CD8-positive, alpha-beta T cell (primary cell): ENCODE measurements at regions of chr19 and their contacts with region 1.

Region 1: GRCh38 chr19:8580710-8581281 is 3.6 kb upstream of the MYO1F start:
- DNase-seq: peak; percentile 78 to 96 (median 88)
- ATAC-seq: peak; percentile 71
- H3K4me3 ChIP-seq: no peak overlapping the region
- H3K4me3 Mint-ChIP-seq: no peak overlapping the region
- H3K27ac ChIP-seq: no peak overlapping the region
- H3K27ac Mint-ChIP-seq: no peak overlapping the region
- H3K4me1 ChIP-seq: peaks cover 51% of the 10 kb centered on the region
- H3K4me1 Mint-ChIP-seq: peaks cover 33% of the 10 kb centered on the region
- H3K27me3 ChIP-seq: no peaks in the 10 kb centered on the region
- H3K27me3 Mint-ChIP-seq: no peaks in the 10 kb centered on the region
- CTCF ChIP-seq: peak; percentile 99

Region 2: GRCh38 chr19:7394731-7395359 is 1186.0 kb before region 1 on chr19:
- CTCF ChIA-PET with region 1: no interaction called
- POLR2A ChIA-PET with region 1: no interaction called
- intact Hi-C with region 1: loop called in 1 of 2 experiments (anchors 5 kb)
- DNase-seq: peak; percentile 79 to 97 (median 89)
- ATAC-seq: peak; percentile 90
- H3K4me3 ChIP-seq: peak overlapping the region; percentile 39 to 65
- H3K4me3 Mint-ChIP-seq: peak overlapping the region; percentile 86
- H3K27ac ChIP-seq: peak overlapping the region; percentile 12 to 72
- H3K27ac Mint-ChIP-seq: peak overlapping the region; percentile 87
- H3K4me1 ChIP-seq: peaks cover 26% of the 10 kb centered on the region
- H3K4me1 Mint-ChIP-seq: peaks cover 41% of the 10 kb centered on the region
- H3K27me3 ChIP-seq: no peaks in the 10 kb centered on the region
- H3K27me3 Mint-ChIP-seq: no peaks in the 10 kb centered on the region
- CTCF ChIP-seq: no peak

Region 3: DNA sequence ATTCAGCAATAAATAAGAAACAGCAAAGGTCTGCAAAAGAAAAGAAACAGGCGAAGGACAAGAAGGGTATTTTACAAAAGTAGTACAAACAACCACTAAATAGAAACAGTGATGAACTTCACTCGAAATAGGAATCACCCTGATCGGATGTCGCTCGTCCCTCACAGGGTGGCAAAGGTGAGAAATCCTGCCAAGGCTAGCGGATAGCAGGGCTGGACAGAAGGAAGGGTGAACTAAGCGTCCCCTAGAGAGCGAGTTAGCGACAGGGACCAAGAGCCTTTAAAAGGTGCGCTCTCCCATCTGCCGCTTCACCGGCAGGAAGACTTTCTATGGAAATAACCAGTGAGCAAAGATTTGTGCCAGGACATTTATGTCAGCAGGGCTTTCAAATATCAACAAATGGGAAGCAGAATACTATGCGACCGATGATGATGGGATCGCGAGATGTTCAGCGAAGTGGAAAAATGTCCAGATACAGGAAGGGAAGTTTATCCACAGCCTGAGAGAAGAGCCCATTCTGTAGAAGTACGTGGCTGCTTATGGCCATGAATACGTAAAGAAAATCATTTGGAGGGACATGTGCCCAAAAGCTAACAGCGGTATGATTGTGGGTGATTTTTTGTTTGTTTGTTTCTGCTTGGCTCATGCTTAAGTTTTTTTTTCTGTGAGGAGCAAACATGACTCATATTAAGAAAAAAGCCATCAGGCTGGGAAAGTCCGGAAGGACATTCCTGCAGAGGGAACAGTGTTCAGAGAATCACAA is 594.3 kb before region 1 on chr19:
- CTCF ChIA-PET with region 1: no interaction called
- POLR2A ChIA-PET with region 1: no interaction called
- intact Hi-C with region 1: no loop called
- DNase-seq: no peak
- ATAC-seq: no peak
- H3K4me3 ChIP-seq: no peak overlapping the region
- H3K4me3 Mint-ChIP-seq: no peak overlapping the region
- H3K27ac ChIP-seq: no peak overlapping the region
- H3K27ac Mint-ChIP-seq: no peak overlapping the region
- H3K4me1 ChIP-seq: no peaks in the 10 kb centered on the region
- H3K4me1 Mint-ChIP-seq: peaks cover 6% of the 10 kb centered on the region
- H3K27me3 ChIP-seq: no peaks in the 10 kb centered on the region
- H3K27me3 Mint-ChIP-seq: no peaks in the 10 kb centered on the region
- CTCF ChIP-seq: no peak

Region 4: DNA sequence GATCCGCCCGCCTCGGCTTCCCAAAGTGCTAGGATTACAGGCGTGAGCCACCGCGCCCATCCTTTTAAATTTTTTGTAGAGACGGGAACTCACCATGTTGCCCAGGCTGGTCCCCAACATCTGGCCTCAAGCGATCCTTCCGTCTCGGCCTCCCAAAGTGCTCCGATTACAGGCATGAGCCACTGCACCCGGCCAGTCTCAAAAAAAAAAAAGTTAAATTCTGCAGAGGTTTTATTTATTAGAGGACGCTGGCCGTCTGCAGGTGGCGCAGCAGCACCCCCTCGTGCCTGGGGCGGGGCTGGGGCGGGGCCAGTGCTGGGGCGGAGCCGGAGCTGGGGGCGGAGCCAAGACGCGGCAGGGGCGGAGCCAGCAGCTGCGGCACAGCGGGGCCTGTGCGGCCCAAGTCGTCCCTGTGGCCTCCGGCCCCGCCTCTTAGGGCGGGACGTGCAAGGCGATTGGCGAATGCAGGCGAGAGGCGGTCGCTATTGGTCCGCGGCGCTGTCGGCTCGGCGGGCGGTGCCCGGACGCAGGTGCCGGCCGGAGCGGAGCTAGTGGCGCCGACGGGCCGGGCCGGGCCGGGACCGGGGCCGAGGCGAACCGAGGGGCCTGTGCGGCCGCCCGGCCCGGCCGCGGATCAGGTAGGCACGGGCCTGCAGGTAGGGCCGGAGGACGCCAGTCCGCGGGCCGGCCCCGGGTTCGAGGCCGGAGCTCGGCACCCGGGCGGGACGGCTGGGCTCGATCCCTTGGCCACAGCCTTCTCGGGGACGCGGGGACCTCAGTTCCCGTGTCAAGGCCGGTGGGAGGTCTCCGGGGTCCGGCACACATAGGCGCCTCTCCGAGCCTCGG is 167.8 kb before region 1 on chr19 and contains the start of gene MARCHF2:
- CTCF ChIA-PET with region 1: interaction called, 40 read pairs
- POLR2A ChIA-PET with region 1: interaction called, 6 read pairs
- intact Hi-C with region 1: loop called (anchors 2 kb)
- DNase-seq: peak; percentile 92 to 99 (median 96)
- ATAC-seq: peak; percentile 100
- H3K4me3 ChIP-seq: peak within 1 kb of the TSS; percentile 66 to 82
- H3K4me3 Mint-ChIP-seq: peak within 1 kb of the TSS; percentile 72
- H3K27ac ChIP-seq: no peak within 1 kb of the TSS
- H3K27ac Mint-ChIP-seq: no peak within 1 kb of the TSS
- H3K4me1 ChIP-seq: peaks cover 7% of the 10 kb centered on the region
- H3K4me1 Mint-ChIP-seq: peaks cover 8% of the 10 kb centered on the region
- H3K27me3 ChIP-seq: no peaks in the 10 kb centered on the region
- H3K27me3 Mint-ChIP-seq: no peaks in the 10 kb centered on the region
- CTCF ChIP-seq: peak; percentile 65
- total RNA-seq, gene MARCHF2: 14.5 to 17.5 TPM

Region 5: GRCh38 chr19:8513687-8514504 is 66.9 kb before region 1 on chr19 and contains the start of gene ZNF414:
- CTCF ChIA-PET with region 1: interaction called, 202 read pairs
- POLR2A ChIA-PET with region 1: interaction called, 81 read pairs
- intact Hi-C with region 1: loop called (anchors 2 kb)
- DNase-seq: peak; percentile 96 to 99 (median 97)
- ATAC-seq: peak; percentile 76
- H3K4me3 ChIP-seq: peak within 1 kb of the TSS; percentile 59 to 98
- H3K4me3 Mint-ChIP-seq: peak within 1 kb of the TSS; percentile 95
- H3K27ac ChIP-seq: peak within 1 kb of the TSS; percentile 90 to 96
- H3K27ac Mint-ChIP-seq: peak within 1 kb of the TSS; percentile 99
- H3K4me1 ChIP-seq: peaks cover 65% of the 10 kb centered on the region
- H3K4me1 Mint-ChIP-seq: peaks cover 51% of the 10 kb centered on the region
- H3K27me3 ChIP-seq: no peaks in the 10 kb centered on the region
- H3K27me3 Mint-ChIP-seq: no peaks in the 10 kb centered on the region
- CTCF ChIP-seq: no peak
- total RNA-seq, gene ZNF414: 26.3 to 33.1 TPM

Region 6: GRCh38 chr19:8557642-8558238 is 23.1 kb before region 1 on chr19:
- CTCF ChIA-PET with region 1: interaction called, 42 read pairs
- POLR2A ChIA-PET with region 1: interaction called, 6 read pairs
- intact Hi-C with region 1: no loop called
- DNase-seq: no peak
- ATAC-seq: no peak
- H3K4me3 ChIP-seq: no peak overlapping the region
- H3K4me3 Mint-ChIP-seq: no peak overlapping the region
- H3K27ac ChIP-seq: peak overlapping the region in 1 of 2 experiments; percentile 27
- H3K27ac Mint-ChIP-seq: peak overlapping the region; percentile 82
- H3K4me1 ChIP-seq: peaks cover 14% of the 10 kb centered on the region
- H3K4me1 Mint-ChIP-seq: peaks cover 32% of the 10 kb centered on the region
- H3K27me3 ChIP-seq: no peaks in the 10 kb centered on the region
- H3K27me3 Mint-ChIP-seq: no peaks in the 10 kb centered on the region
- CTCF ChIP-seq: no peak

Region 7: DNA sequence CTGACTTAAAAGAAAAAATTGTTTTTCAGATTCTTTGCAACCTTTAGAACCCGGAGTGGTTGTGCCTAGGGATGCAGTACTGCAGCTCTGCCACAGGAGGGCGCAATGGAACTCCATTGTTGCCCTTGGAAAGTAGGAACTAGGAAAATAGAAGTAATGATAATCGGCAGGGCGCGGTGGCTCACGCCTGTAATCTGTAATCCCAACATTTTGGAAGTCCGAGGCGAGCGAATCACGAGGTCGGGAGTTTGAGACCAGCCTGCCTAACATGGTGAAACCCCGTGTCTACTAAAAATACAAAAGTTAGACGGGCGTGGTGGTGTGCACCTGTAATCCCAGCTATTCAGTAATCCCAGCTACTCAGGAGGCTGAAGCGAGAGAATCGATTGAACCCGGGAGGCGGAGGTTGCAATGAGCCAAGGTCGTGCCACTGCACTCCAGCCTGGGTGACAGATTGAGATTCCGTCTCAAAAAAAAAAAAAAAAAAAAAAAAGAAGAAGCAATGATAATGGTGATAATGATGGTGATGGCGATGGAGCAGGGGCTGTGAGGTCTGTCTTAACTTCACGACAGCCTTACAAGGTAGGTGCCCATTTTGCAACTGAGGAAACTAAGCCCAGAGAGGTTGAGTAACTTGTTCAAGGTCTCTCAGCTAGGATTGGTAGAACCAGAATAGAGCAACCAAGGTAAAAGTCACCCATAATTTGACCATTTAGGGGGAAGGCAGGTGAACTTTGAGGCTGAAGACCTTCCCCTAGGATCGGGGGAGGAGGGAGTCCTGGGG is 35.2 kb after region 1 on chr19:
- CTCF ChIA-PET with region 1: interaction called, 11 read pairs
- POLR2A ChIA-PET with region 1: no interaction called
- intact Hi-C with region 1: no loop called
- DNase-seq: peak in 7 of 9 experiments; percentile 38 to 77 (median 69)
- ATAC-seq: peak; percentile 50
- H3K4me3 ChIP-seq: no peak overlapping the region
- H3K4me3 Mint-ChIP-seq: no peak overlapping the region
- H3K27ac ChIP-seq: no peak overlapping the region
- H3K27ac Mint-ChIP-seq: no peak overlapping the region
- H3K4me1 ChIP-seq: peaks cover 29% of the 10 kb centered on the region
- H3K4me1 Mint-ChIP-seq: peaks cover 24% of the 10 kb centered on the region
- H3K27me3 ChIP-seq: no peaks in the 10 kb centered on the region
- H3K27me3 Mint-ChIP-seq: no peaks in the 10 kb centered on the region
- CTCF ChIP-seq: peak; percentile 92

Region 8: DNA sequence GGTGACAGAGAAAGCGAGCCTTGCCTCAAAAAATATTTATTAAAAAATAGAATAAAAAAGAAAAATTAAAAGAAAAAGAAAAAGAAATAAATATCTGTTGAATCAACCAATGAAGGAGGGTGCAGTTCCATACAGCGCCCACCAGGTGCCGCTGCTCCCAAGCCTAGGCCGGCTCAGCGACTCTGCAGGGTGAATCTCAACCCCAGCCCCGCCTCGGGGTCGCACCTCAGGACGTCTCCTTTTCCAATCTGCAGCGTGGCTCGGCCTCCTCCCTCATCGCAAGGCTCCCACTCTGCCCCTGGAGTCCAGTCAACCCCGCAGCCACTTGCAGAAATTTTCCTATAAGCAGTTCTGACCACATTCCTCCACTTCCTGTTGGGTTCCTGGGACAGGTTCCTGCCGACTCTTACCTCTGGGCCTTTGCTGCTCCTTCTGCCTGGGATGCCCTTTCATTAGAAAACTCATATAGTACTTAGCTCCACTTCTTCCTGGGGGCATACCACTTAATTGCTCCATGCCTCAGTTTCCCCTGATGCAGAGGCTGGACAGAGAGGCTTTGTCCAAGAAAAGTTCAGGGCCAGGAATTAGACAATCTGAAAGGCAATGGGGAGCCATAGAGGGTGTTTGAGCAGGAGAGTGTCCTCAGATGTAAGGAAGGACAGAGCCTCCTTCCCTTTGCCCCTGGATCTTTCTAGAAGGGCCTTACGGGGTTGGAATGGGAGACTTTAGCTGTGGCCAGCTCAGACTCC is 74.0 kb after region 1 on chr19:
- CTCF ChIA-PET with region 1: interaction called, 16 read pairs
- POLR2A ChIA-PET with region 1: interaction called, 3 read pairs
- intact Hi-C with region 1: no loop called
- DNase-seq: peak; percentile 49 to 86 (median 70)
- ATAC-seq: peak; percentile 90
- H3K4me3 ChIP-seq: peak overlapping the region; percentile 15 to 38
- H3K4me3 Mint-ChIP-seq: peak overlapping the region; percentile 61
- H3K27ac ChIP-seq: no peak overlapping the region
- H3K27ac Mint-ChIP-seq: no peak overlapping the region
- H3K4me1 ChIP-seq: peaks cover 22% of the 10 kb centered on the region
- H3K4me1 Mint-ChIP-seq: peaks cover 21% of the 10 kb centered on the region
- H3K27me3 ChIP-seq: no peaks in the 10 kb centered on the region
- H3K27me3 Mint-ChIP-seq: no peaks in the 10 kb centered on the region
- CTCF ChIP-seq: peak; percentile 100